A549 (cell line): ENCODE measurements at regions of chr6 and their contacts with region 1.

Region 1: DNA sequence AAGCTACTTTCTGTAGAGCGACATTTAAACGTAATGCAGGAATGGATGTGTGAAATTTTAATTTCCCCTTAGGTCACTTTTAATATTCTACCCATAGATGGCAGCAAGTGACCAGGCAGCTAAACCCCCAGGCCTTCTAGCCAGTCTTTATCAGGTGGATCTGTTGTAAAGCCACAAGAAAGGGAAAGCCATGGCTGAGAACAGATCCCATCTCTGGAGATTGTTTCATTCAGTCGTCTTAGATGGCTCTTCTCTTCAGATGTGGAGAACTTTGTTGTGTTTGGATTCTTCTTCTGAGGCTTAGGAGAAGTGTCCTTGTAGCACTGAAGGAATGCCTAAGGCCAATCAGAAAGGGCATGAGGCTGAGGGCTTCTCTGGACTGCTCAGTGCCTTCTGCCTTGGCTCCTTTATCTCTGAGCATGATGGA is 15.8 kb upstream of the RNF182 start:
- DNase-seq: peak; percentile 58 to 64
- ATAC-seq: peak; percentile 80 to 83
- H3K4me3 ChIP-seq: no peak overlapping the region
- H3K27ac ChIP-seq: no peak overlapping the region
- H3K4me1 ChIP-seq: peaks cover 6% of the 10 kb centered on the region; the same call in 1 of the 3 replicates
- CTCF ChIP-seq: peak; percentile 82
- EP300 ChIP-seq: no peak
- POLR2A ChIP-seq: no peak
- RAD21 ChIP-seq: peak; percentile 90

Region 2: GRCh38 chr6:13159300-13159699 is 749.7 kb before region 1 on chr6:
- CTCF ChIA-PET with region 1: no interaction called
- POLR2A ChIA-PET with region 1: no interaction called
- DNase-seq: no peak
- ATAC-seq: no peak
- H3K4me3 ChIP-seq: no peak overlapping the region
- H3K27ac ChIP-seq: no peak overlapping the region
- H3K4me1 ChIP-seq: no peaks in the 10 kb centered on the region
- CTCF ChIP-seq: no peak
- EP300 ChIP-seq: no peak
- POLR2A ChIP-seq: no peak
- RAD21 ChIP-seq: no peak

Region 3: GRCh38 chr6:13885601-13886000 is 23.4 kb before region 1 on chr6:
- CTCF ChIA-PET with region 1: interaction called, 11 read pairs
- POLR2A ChIA-PET with region 1: no interaction called
- DNase-seq: no peak
- ATAC-seq: no peak
- H3K4me3 ChIP-seq: no peak overlapping the region
- H3K27ac ChIP-seq: no peak overlapping the region
- H3K4me1 ChIP-seq: no peaks in the 10 kb centered on the region
- CTCF ChIP-seq: no peak
- EP300 ChIP-seq: no peak
- POLR2A ChIP-seq: no peak
- RAD21 ChIP-seq: no peak

Region 4: GRCh38 chr6:13920552-13920951 is 11.6 kb after region 1 on chr6:
- CTCF ChIA-PET with region 1: interaction called, 11 read pairs
- POLR2A ChIA-PET with region 1: no interaction called
- DNase-seq: no peak
- ATAC-seq: no peak
- H3K4me3 ChIP-seq: no peak overlapping the region
- H3K27ac ChIP-seq: no peak overlapping the region
- H3K4me1 ChIP-seq: 0 out of 3 replicates have a peak, but pooled peaks cover 6% of the 10 kb centered on the region
- CTCF ChIP-seq: no peak
- EP300 ChIP-seq: no peak
- POLR2A ChIP-seq: no peak
- RAD21 ChIP-seq: no peak

Region 5: GRCh38 chr6:13941902-13942301 is 32.9 kb after region 1 on chr6:
- CTCF ChIA-PET with region 1: no interaction called
- POLR2A ChIA-PET with region 1: no interaction called
- DNase-seq: no peak
- ATAC-seq: no peak
- H3K4me3 ChIP-seq: no peak overlapping the region
- H3K27ac ChIP-seq: no peak overlapping the region
- H3K4me1 ChIP-seq: no peaks in the 10 kb centered on the region
- CTCF ChIP-seq: no peak
- EP300 ChIP-seq: no peak
- POLR2A ChIP-seq: no peak
- RAD21 ChIP-seq: no peak

Region 6: DNA sequence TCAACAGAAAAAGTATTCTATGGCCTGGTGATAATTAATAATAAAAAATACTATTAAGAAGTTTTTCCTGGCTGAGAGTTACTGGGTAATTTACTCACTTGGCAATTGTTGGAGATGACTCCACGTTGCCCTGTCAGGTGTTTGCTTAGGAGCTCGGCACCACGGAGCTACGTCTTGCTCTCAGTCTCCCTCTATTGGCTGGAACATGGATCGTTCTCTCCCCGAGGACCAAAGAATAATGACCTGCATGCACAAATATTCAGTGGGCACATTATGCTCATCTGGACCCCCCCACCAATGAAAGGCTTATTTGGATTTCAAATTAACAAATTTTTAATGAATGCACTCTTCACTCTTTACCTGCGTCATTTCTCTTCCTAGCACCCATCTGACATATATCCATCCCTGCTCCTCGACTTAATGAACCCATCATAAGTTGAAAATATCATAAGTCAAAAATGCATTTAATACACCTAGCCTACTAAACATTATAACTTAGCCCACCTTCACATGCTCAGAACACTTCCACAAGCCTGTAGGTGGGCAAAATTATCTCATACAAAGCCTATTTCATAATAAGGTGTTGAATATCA is 137.6 kb after region 1 on chr6:
- CTCF ChIA-PET with region 1: interaction called, 29 read pairs
- POLR2A ChIA-PET with region 1: no interaction called
- DNase-seq: peak; percentile 54 to 60
- ATAC-seq: peak; percentile 84 to 85; a peak in 5 of 6 replicates
- H3K4me3 ChIP-seq: no peak overlapping the region
- H3K27ac ChIP-seq: no peak overlapping the region
- H3K4me1 ChIP-seq: no peaks in the 10 kb centered on the region
- CTCF ChIP-seq: peak; percentile 54
- EP300 ChIP-seq: no peak
- POLR2A ChIP-seq: no peak
- RAD21 ChIP-seq: peak; percentile 56 to 58

Region 7: GRCh38 chr6:14066782-14067406 is 157.9 kb after region 1 on chr6:
- CTCF ChIA-PET with region 1: interaction called, 186 read pairs
- POLR2A ChIA-PET with region 1: interaction called, 4 read pairs
- DNase-seq: peak; percentile 54 to 65
- ATAC-seq: peak; percentile 74 to 83
- H3K4me3 ChIP-seq: no peak overlapping the region
- H3K27ac ChIP-seq: no peak overlapping the region
- H3K4me1 ChIP-seq: no peaks in the 10 kb centered on the region
- CTCF ChIP-seq: peak; percentile 70
- EP300 ChIP-seq: no peak
- POLR2A ChIP-seq: no peak
- RAD21 ChIP-seq: peak; percentile 78 to 81

Region 8: GRCh38 chr6:14144678-14145113 is 235.7 kb after region 1 on chr6:
- CTCF ChIA-PET with region 1: interaction called, 10 read pairs
- POLR2A ChIA-PET with region 1: no interaction called
- DNase-seq: peak; percentile 66 to 77
- ATAC-seq: peak; percentile 84 to 97; a peak in 5 of 6 replicates
- H3K4me3 ChIP-seq: no peak overlapping the region
- H3K27ac ChIP-seq: no peak overlapping the region
- H3K4me1 ChIP-seq: no peaks in the 10 kb centered on the region
- CTCF ChIP-seq: peak; percentile 64
- EP300 ChIP-seq: no peak
- POLR2A ChIP-seq: no peak
- RAD21 ChIP-seq: peak; percentile 57 to 66